ENCODE measurements at regions of chr7 and their contacts with region 1.

Region 1: DNA sequence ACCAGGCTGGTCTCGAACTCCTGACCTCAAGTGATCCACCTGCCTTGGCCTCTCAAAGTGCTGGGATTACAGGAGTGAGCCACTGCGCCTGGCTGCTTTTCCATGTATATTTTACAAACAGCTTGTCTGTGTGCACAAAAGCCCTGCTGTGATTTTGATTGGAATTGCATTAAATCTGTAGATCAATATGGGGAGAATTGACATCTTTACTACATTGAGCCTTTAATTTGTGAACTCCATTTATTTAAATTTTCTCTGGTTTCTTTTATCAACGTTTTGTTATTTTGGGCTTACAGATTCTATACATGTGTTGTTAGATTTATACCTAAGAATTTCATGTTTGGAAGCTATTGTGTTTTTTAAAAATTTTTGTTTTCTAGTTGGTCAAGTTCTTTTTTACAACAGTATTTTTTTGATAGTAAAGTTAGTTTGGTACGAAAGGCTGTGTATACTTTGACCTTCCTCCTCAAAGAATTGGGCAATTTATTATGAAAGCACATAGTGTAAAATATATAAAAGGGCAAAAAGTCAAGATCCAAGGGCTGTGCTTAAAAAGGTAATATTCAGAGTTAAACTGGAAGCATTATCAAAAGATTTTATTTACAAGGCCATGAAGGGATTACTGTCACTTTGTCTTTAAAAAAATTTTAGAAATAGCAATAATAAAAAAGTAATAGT is 92.8 kb downstream of the STK31 start:
- DNase-seq: no peak
- H3K4me3 Mint-ChIP-seq: no peak overlapping the region
- H3K27ac Mint-ChIP-seq: no peak overlapping the region
- H3K4me1 Mint-ChIP-seq: peaks cover 11% of the 10 kb centered on the region
- H3K27me3 Mint-ChIP-seq: peaks cover 8% of the 10 kb centered on the region
- CTCF ChIP-seq: no peak

Region 2: GRCh38 chr7:23759671-23760391 is 43.0 kb before region 1 on chr7:
- CTCF ChIA-PET with region 1: no interaction called
- intact Hi-C with region 1: loop called (anchors 2 kb)
- DNase-seq: peak; percentile 56
- H3K4me3 Mint-ChIP-seq: no peak overlapping the region
- H3K27ac Mint-ChIP-seq: peak overlapping the region; percentile 65
- H3K4me1 Mint-ChIP-seq: peaks cover 31% of the 10 kb centered on the region
- H3K27me3 Mint-ChIP-seq: no peaks in the 10 kb centered on the region
- CTCF ChIP-seq: no peak